Calu3 (cell line): ENCODE measurements at regions of chr5 and their contacts with region 1.

Region 1: GRCh38 chr5:59598547-59598874 is 295.0 kb downstream of the PDE4D start:
- DNase-seq: no peak
- H3K4me3 Mint-ChIP-seq: peak overlapping the region; percentile 63
- H3K27ac Mint-ChIP-seq: peak overlapping the region; percentile 59
- H3K4me1 Mint-ChIP-seq: peaks cover 38% of the 10 kb centered on the region
- H3K27me3 Mint-ChIP-seq: no peaks in the 10 kb centered on the region
- CTCF ChIP-seq: no peak

Region 2: GRCh38 chr5:59759600-59760351 is 161.3 kb after region 1 on chr5:
- CTCF ChIA-PET with region 1: no interaction called
- intact Hi-C with region 1: loop called (anchors 10 kb)
- DNase-seq: peak; percentile 63
- H3K4me3 Mint-ChIP-seq: peak overlapping the region; percentile 71
- H3K27ac Mint-ChIP-seq: peak overlapping the region; percentile 100
- H3K4me1 Mint-ChIP-seq: peaks cover 30% of the 10 kb centered on the region
- H3K27me3 Mint-ChIP-seq: no peaks in the 10 kb centered on the region
- CTCF ChIP-seq: no peak